H1 (cell line): ENCODE measurements at regions of chr3 and their contacts with region 1.

Region 1: GRCh38 chr3:43155464-43156121 is 49.7 kb upstream of the POMGNT2 start:
- DNase-seq: peak; percentile 23 to 71
- H3K4me3 ChIP-seq: no peak overlapping the region
- H3K27ac ChIP-seq: no peak overlapping the region
- H3K4me1 ChIP-seq: no peaks in the 10 kb centered on the region; a peak in 1 of 7 replicates
- H3K27me3 ChIP-seq: peaks cover 0 to 8% (median 0%) of the 10 kb centered on the region in 4 experiments; a peak in 3 of 7 replicates
- CTCF ChIP-seq: peak; percentile 69 to 80 (median 80)
- EP300 ChIP-seq: no peak
- POLR2A ChIP-seq: no peak
- RAD21 ChIP-seq: peak; percentile 85 to 87

Region 2: DNA sequence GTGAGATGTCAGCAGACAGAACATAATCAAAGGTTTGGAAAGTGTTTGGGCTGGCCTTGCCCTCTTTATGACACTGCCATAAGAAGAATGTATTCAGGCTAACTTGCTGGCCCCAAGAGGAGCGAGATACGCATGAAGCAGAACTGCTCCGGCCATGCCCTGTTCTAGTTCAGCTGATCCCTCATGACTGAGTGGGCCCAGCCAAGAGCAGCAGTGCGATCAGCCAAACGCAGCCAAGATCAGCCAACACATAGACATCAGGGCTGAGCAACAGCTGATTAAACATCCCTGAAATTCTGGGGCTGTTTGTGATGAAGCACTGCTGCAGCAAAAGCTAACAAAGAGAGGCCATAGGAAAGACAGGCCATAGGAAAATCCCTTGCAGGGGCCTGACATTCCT is 73.8 kb before region 1 on chr3:
- CTCF ChIA-PET with region 1: no interaction called
- POLR2A ChIA-PET with region 1: no interaction called
- DNase-seq: peak in 1 of 2 experiments; percentile 17
- H3K4me3 ChIP-seq: no peak overlapping the region
- H3K27ac ChIP-seq: no peak overlapping the region
- H3K4me1 ChIP-seq: no peaks in the 10 kb centered on the region
- H3K27me3 ChIP-seq: no peaks in the 10 kb centered on the region
- CTCF ChIP-seq: no peak
- EP300 ChIP-seq: no peak
- POLR2A ChIP-seq: no peak
- RAD21 ChIP-seq: no peak

Region 3: DNA sequence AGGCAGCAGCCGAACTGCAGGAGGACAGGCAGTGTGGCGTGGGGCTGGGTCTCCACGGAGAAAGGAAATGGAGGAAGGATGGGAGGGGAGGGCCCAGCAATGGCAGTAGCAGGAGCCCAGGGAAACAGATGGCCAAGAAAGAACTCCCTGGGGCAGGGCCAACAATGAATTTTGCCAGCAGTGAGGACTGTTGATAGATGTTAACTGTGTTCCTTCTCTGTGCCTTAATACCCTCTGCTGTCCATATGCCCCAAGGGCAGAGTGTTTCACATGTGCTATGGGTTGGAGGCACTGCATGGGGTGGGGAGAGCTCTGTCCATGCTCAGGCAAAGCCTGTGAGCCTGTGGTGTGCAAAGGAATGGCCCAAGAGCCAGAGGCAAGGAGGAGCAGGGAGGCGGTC is 21.1 kb after region 1 on chr3:
- CTCF ChIA-PET with region 1: interaction called, 10 read pairs
- POLR2A ChIA-PET with region 1: no interaction called
- DNase-seq: no peak
- H3K4me3 ChIP-seq: no peak overlapping the region
- H3K27ac ChIP-seq: no peak overlapping the region
- H3K4me1 ChIP-seq: no peaks in the 10 kb centered on the region; a peak in 1 of 7 replicates
- H3K27me3 ChIP-seq: no peaks in the 10 kb centered on the region
- CTCF ChIP-seq: no peak
- EP300 ChIP-seq: no peak
- POLR2A ChIP-seq: no peak
- RAD21 ChIP-seq: no peak